Transverse colon (tissue), 4 donors: ENCODE measurements at regions of chr16 and their contacts with region 1.

Region 1: DNA sequence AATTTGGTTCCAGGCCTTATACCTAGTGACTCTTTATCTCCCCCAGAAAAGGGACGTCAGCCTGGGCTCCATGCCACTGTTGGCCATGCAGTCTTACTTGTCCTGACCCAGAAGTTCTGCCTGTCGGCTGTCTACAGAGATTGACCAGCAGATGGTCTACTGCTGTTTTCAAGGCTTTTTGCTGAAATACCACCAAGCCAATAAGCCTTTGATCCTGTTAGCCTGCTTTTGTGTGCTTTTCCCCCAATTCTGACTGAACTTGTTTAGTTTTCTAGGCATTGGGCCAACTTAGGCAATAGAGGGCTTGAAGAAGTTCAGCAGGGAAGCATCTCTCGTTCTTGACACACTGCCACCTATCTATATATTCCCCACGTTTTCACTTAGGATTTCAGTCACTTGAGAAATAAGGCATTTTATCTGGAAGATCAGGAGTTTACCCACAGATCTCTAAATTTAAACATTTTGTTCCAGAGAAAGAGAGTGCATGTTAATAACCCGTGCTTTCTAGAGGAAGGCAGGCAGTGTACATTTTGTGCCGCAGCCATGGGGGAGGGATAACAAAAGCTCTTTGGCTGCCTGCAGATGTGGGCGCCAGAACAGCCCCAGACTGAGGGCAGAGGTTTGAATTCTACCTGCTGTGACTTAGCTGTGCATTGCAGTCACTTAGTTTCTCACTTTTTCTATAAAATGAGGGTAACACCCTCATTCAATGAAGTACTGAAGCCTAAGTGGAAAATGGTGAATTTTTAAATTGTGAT is 12.3 kb upstream of the CARMIL2 start:
- DNase-seq: no peak
- H3K4me3 ChIP-seq: no peak overlapping the region
- H3K27ac ChIP-seq: no peak overlapping the region
- H3K4me1 ChIP-seq: no peaks in the 10 kb centered on the region
- H3K27me3 ChIP-seq: no peaks in the 10 kb centered on the region
- CTCF ChIP-seq: no peak
- EP300 ChIP-seq: no peak
- POLR2A ChIP-seq: no peak

Region 2: GRCh38 chr16:67571981-67572431 is 60.6 kb before region 1 on chr16:
- in situ Hi-C with region 1: loop called in 1 of 4 experiments (anchors 10 kb)
- intact Hi-C with region 1: no loop called
- DNase-seq: no peak
- H3K4me3 ChIP-seq: no peak overlapping the region
- H3K27ac ChIP-seq: no peak overlapping the region
- H3K4me1 ChIP-seq: peaks cover 0 to under 1% (median 0%) of the 10 kb centered on the region in 4 donors
- H3K27me3 ChIP-seq: no peaks in the 10 kb centered on the region
- CTCF ChIP-seq: no peak
- EP300 ChIP-seq: no peak
- POLR2A ChIP-seq: no peak

Region 3: DNA sequence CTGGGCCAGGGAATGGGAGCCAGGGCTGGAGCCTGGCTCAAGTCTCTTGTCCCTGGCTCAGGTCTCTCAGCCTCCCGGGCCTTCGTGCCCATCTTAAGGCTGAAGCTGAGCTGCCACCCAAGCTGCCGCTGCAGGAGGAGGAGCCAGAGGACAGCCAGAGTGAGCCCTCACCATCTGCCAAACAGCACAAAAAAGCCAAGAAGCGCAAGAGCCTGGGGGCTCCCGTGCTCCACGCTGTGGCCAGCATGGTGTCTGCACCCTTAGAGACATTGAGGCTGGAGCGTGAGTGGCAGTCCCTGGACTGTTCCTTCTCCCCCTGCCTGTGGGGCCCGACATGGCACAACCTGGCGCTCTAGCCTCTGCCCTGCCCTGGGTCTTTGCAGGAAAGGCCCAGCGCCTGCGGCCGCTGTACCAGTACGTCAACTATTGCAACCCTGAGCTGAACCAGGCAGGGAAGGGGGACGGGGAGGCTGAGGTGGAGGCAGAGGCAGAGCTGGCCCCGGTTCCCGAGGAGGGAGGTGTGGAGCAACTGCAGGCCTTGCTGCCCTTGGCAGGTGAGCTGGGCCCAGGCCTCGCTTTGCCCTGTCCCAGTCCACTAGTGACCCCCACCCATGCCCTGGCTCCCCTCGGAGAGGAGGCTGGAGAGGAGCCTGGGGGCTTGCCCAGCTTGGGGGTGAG is 35.4 kb after region 1 on chr16:
- in situ Hi-C with region 1: no loop called
- intact Hi-C with region 1: no loop called
- DNase-seq: peak; percentile 87
- H3K4me3 ChIP-seq: peak overlapping the region in 2 of 4 donors; percentile 82 to 91
- H3K27ac ChIP-seq: peak overlapping the region; percentile 86 to 95 (median 88)
- H3K4me1 ChIP-seq: peaks cover 19 to 33% (median 28%) of the 10 kb centered on the region in 4 donors
- H3K27me3 ChIP-seq: no peaks in the 10 kb centered on the region
- CTCF ChIP-seq: peak; percentile 75 to 96 (median 85)
- EP300 ChIP-seq: no peak
- POLR2A ChIP-seq: no peak

Region 4: DNA sequence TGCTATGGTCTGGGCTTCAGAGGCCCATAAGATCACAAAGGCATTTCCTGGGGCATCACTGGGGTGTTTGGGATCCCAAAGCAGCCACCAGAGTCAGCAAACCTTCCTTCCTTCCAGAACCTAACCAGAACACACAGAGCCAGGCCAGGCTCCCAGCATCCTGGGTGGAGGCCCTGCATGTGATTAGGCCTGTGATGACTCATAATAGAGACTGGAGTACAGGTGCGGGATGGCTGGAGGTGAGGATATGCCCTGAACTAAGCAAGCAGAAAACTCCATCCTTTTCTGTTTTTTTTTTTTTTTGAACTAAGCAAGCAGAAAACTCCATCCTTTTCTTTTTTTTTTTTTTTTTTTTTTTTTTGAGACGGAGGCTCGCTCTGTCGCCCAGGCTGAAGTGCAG is 104.3 kb after region 1 on chr16:
- in situ Hi-C with region 1: no loop called
- intact Hi-C with region 1: no loop called
- DNase-seq: no peak
- H3K4me3 ChIP-seq: no peak overlapping the region
- H3K27ac ChIP-seq: no peak overlapping the region
- H3K4me1 ChIP-seq: no peaks in the 10 kb centered on the region
- H3K27me3 ChIP-seq: no peaks in the 10 kb centered on the region
- CTCF ChIP-seq: no peak
- EP300 ChIP-seq: no peak
- POLR2A ChIP-seq: no peak